ENCODE measurements at regions of chr11 and their contacts with region 1.

Region 1: DNA sequence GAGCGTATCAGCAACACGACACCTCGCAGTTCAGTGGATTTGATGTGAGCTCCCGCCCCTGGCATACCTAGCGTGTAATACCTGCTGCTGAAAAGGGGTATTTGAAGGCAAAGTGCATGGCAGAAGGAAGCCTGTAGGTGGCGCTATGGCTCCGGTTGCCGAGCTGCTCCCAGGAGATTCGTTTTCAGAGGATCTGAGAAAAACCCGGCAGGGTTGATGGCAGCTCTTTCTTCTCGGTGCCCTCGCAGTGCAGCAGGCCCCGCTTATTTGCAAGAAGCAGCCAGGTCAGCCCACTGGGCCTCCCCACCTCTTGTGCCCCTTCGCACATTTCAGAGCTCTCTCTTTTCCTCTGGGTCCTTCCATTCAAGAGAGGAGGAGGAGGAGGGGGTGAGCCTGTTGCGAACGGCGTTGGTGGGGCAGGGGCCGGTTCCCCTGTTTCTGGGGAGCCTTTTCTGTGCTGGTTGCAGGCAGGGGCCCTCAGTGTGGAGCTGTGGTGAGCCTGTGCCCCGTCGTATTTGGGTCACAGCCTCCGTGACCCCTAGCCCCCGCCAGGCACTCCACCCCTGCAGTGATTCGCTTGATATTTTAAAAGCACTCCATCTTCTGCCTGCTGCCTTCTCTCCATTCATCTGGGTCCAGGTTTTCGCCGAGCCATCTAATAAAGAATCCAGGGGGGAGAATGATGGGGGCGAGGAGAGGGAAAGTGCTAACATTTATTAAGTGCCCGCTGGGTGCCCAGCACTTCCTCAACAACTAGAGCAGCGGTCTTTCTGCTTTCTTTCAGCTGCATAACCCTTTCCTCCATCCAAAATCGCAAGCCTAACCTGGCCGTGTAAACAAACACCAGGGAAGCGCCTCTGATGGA is 85.3 kb upstream of the SYT13 start:
- DNase-seq: peak; percentile 37 to 65 (median 48)
- H3K4me3 ChIP-seq: no peak overlapping the region
- H3K4me3 Mint-ChIP-seq: peak overlapping the region in 2 of 7 donors; percentile 28 to 48
- H3K27ac ChIP-seq: no peak overlapping the region
- H3K27ac Mint-ChIP-seq: peak overlapping the region in 2 of 8 donors; percentile 30 to 77
- H3K4me1 ChIP-seq: peaks cover 16% of the 10 kb centered on the region
- H3K4me1 Mint-ChIP-seq: peaks cover 24 to 37% (median 32%) of the 10 kb centered on the region in 3 donors
- H3K27me3 ChIP-seq: peaks cover 15% of the 10 kb centered on the region
- H3K27me3 Mint-ChIP-seq: peaks cover 19 to 28% of the 10 kb centered on the region in 2 donors

Region 2: GRCh38 chr11:44861849-44862749 is 509.4 kb before region 1 on chr11:
- CTCF ChIA-PET with region 1: no interaction called
- POLR2A ChIA-PET with region 1: interaction called, 10 read pairs
- DNase-seq: peak; percentile 28 to 94 (median 69)
- H3K4me3 ChIP-seq: no peak overlapping the region
- H3K4me3 Mint-ChIP-seq: peak overlapping the region; percentile 12 to 89 (median 67)
- H3K27ac ChIP-seq: no peak overlapping the region
- H3K27ac Mint-ChIP-seq: peak overlapping the region; percentile 61 to 94 (median 78)
- H3K4me1 ChIP-seq: peaks cover 17% of the 10 kb centered on the region
- H3K4me1 Mint-ChIP-seq: peaks cover 36 to 45% (median 38%) of the 10 kb centered on the region in 3 donors
- H3K27me3 ChIP-seq: no peaks in the 10 kb centered on the region
- H3K27me3 Mint-ChIP-seq: peaks cover 1 to 5% of the 10 kb centered on the region in 2 donors

Region 3: DNA sequence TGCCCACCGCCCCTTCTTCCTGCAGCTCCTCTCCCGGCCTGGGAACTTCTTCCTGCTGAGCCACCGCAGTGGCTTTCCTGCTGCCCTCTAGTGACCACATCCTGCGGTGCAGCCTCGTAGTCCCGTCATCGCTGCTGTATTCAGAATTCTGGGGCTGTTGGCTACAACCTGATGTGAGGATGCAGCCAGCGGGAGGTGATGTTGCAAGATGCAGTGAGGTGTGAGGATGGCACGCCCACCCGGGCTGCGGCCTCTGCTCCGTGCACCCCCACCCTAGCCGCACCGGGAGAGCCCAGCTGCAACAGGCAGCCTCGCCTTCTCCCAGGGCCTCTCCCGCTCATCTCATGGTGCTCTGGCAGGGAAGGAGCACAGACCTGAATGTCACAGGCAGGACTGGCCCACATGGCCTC is 283.9 kb after region 1 on chr11:
- CTCF ChIA-PET with region 1: interaction called, 29 read pairs
- POLR2A ChIA-PET with region 1: no interaction called
- DNase-seq: peak; percentile 12 to 59 (median 31)
- H3K4me3 ChIP-seq: no peak overlapping the region
- H3K4me3 Mint-ChIP-seq: peak overlapping the region in 1 of 7 donors; percentile 58
- H3K27ac ChIP-seq: no peak overlapping the region
- H3K27ac Mint-ChIP-seq: no peak overlapping the region
- H3K4me1 ChIP-seq: no peaks in the 10 kb centered on the region
- H3K4me1 Mint-ChIP-seq: peaks cover 4 to 12% (median 7%) of the 10 kb centered on the region in 3 donors
- H3K27me3 ChIP-seq: no peaks in the 10 kb centered on the region
- H3K27me3 Mint-ChIP-seq: peaks cover 26 to 41% of the 10 kb centered on the region in 2 donors

Measured in CD8-positive, alpha-beta memory T cell (primary cell).